CD14-positive monocyte (primary cell): ENCODE measurements at regions of chr3 and their contacts with region 1.

Region 1: GRCh38 chr3:57755668-57756527 is at the start of gene SLMAP:
- DNase-seq: peak; percentile 94 to 95 (median 94)
- H3K4me3 ChIP-seq: peak within 1 kb of the TSS; percentile 86 to 98 (median 97)
- H3K4me3 Mint-ChIP-seq: peak within 1 kb of the TSS; percentile 99 to 100
- H3K27ac ChIP-seq: peak within 1 kb of the TSS; percentile 1 to 95
- H3K27ac Mint-ChIP-seq: peak within 1 kb of the TSS; percentile 88 to 98 (median 94)
- H3K4me1 ChIP-seq: peaks cover 27 to 39% of the 10 kb centered on the region in 2 donors
- H3K4me1 Mint-ChIP-seq: peaks cover 34% of the 10 kb centered on the region
- H3K27me3 ChIP-seq: no peaks in the 10 kb centered on the region
- H3K27me3 Mint-ChIP-seq: no peaks in the 10 kb centered on the region
- CTCF ChIP-seq: no peak
- polyA plus RNA-seq, gene SLMAP: 12.3 to 17.6 (median 16.1) TPM

Region 2: GRCh38 chr3:56915966-56916586 is 839.8 kb before region 1 on chr3:
- intact Hi-C with region 1: no loop called
- DNase-seq: peak; percentile 52 to 68 (median 55)
- H3K4me3 ChIP-seq: peak overlapping the region; percentile 38 to 78 (median 40)
- H3K4me3 Mint-ChIP-seq: peak overlapping the region; percentile 75 to 88
- H3K27ac ChIP-seq: peak overlapping the region; percentile 11 to 56
- H3K27ac Mint-ChIP-seq: peak overlapping the region; percentile 8 to 80 (median 50)
- H3K4me1 ChIP-seq: peaks cover 36 to 43% of the 10 kb centered on the region in 2 donors
- H3K4me1 Mint-ChIP-seq: peaks cover 46% of the 10 kb centered on the region
- H3K27me3 ChIP-seq: no peaks in the 10 kb centered on the region
- H3K27me3 Mint-ChIP-seq: peaks cover 0 to 1% (median 0%) of the 10 kb centered on the region in 3 donors
- CTCF ChIP-seq: no peak

Region 3: DNA sequence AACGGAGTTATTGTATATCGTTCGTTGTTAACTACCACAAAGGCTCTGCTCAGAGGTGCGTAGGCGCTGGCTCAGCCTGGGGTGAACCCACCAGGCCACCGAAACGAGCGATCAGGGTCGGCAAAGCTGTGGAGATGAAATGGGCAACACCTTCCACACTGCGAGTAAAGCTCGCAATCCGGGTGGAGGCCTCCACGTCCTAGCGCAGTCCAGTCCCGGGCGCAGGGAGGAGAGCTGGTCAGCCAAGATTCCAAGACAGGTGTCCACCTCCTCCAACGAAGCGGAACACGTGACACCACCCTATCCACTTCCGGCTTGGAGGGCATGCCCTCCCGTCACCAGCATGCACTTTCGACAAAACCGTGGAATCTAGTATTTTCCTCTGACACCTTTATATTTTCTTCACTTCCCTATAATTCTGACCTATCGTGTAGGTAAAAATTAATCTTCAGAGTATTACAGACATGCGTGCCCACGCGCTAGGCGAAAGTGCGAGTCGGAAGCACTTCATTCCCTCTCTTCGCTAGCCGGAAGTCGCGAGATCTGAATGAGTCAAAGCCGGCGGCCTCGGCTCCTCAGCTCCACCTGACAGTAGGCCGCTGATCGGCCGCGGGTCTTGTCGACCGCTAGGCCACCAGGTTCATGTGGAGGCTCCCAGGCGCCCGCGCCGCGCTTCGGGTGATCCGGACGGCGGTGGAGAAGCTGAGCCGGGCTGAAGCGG is 200.0 kb before region 1 on chr3 and contains the start of gene PDE12:
- intact Hi-C with region 1: loop called in 1 of 2 experiments (anchors 5 kb)
- DNase-seq: peak; percentile 89 to 91 (median 91)
- H3K4me3 ChIP-seq: peak within 1 kb of the TSS; percentile 73 to 94 (median 86)
- H3K4me3 Mint-ChIP-seq: peak within 1 kb of the TSS; percentile 97 to 99
- H3K27ac ChIP-seq: peak within 1 kb of the TSS; percentile 94 to 96
- H3K27ac Mint-ChIP-seq: peak within 1 kb of the TSS; percentile 96 to 100 (median 99)
- H3K4me1 ChIP-seq: peaks cover 25 to 27% of the 10 kb centered on the region in 2 donors
- H3K4me1 Mint-ChIP-seq: peaks cover 32% of the 10 kb centered on the region
- H3K27me3 ChIP-seq: no peaks in the 10 kb centered on the region
- H3K27me3 Mint-ChIP-seq: peaks cover 0 to 1% (median 0%) of the 10 kb centered on the region in 3 donors
- CTCF ChIP-seq: no peak
- polyA plus RNA-seq, gene PDE12: 5.1 to 11.3 (median 11.0) TPM

Region 4: DNA sequence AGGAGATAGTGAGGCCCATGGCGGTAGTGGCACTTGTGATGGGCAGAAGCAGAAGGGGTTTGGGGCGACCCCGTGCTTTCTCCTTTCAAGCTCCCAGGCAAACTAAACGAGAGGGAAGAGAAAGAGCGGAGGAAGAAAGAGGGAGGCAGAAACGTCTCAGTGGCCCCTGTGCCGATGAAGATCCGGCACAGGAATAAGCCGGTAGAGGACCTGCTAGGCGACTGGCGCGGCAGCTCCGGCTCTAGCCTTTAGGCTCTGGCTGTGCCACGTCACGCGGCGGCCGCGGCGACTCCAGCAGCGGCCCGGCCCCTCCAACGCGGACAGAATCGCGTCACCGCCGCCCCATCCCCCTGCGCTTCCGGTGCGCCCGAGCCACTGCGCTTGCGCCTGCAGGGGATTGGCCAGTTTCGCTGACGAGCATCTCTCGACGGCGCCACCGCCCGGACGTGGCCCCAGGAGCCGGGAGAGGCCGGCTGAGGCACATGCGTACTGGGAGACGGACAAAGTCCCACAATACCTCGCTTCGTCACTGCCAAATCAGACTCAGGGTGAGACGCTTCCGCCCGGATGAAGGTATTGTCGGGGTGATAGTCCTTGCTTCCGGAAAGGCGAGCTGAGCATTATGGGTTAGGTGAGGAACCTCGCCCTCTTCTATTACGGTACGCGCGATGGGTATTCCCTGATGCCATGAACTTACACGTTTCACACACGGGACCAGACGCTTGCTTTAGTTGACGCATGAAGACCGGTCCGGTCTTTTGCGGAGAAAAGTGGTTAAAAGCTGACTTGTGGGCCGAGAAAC is 158.6 kb before region 1 on chr3 and contains the start of gene ARF4:
- intact Hi-C with region 1: loop called (anchors 2 to 5 kb)
- DNase-seq: peak; percentile 98 to 100 (median 100)
- H3K4me3 ChIP-seq: peak within 1 kb of the TSS; percentile 79 to 97 (median 87)
- H3K4me3 Mint-ChIP-seq: peak within 1 kb of the TSS; percentile 99
- H3K27ac ChIP-seq: peak within 1 kb of the TSS; percentile 99
- H3K27ac Mint-ChIP-seq: peak within 1 kb of the TSS; percentile 99 to 100 (median 100)
- H3K4me1 ChIP-seq: peaks cover 20 to 31% of the 10 kb centered on the region in 2 donors
- H3K4me1 Mint-ChIP-seq: peaks cover 37% of the 10 kb centered on the region
- H3K27me3 ChIP-seq: no peaks in the 10 kb centered on the region
- H3K27me3 Mint-ChIP-seq: no peaks in the 10 kb centered on the region
- CTCF ChIP-seq: peak; percentile 28
- polyA plus RNA-seq, gene ARF4: 60.2 to 229 (median 224) TPM

Region 5: GRCh38 chr3:57652203-57652602 is 103.7 kb before region 1 on chr3:
- intact Hi-C with region 1: no loop called
- DNase-seq: no peak
- H3K4me3 ChIP-seq: no peak overlapping the region
- H3K4me3 Mint-ChIP-seq: no peak overlapping the region
- H3K27ac ChIP-seq: peak overlapping the region in 1 of 2 donors; percentile 18
- H3K27ac Mint-ChIP-seq: peak overlapping the region in 2 of 7 donors; percentile 5 to 19
- H3K4me1 ChIP-seq: no peaks in the 10 kb centered on the region
- H3K4me1 Mint-ChIP-seq: no peaks in the 10 kb centered on the region
- H3K27me3 ChIP-seq: no peaks in the 10 kb centered on the region
- H3K27me3 Mint-ChIP-seq: no peaks in the 10 kb centered on the region
- CTCF ChIP-seq: no peak

Region 6: DNA sequence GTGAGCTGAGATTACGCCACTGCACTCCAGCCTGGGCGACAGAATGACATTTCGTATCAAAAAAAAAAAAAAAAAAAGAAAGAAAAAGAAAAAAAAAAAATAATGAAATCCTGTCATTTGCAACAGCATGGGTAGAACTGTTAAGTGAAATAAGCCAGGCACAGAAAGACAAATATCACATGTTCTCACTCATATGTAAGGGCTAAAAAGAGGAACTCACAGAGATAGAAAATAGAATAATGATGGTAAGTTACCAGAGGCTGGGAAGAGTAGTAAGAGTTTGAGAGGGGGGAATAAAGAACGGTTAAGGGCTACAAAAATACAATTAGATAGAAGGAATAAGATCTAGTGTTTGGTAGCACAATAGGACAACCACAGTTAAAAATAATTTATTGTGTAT is 82.7 kb before region 1 on chr3:
- intact Hi-C with region 1: loop called in 1 of 2 experiments (anchors 5 kb)
- DNase-seq: peak; percentile 26 to 48 (median 47)
- H3K4me3 ChIP-seq: no peak overlapping the region
- H3K4me3 Mint-ChIP-seq: peak overlapping the region in 1 of 2 donors; percentile 24
- H3K27ac ChIP-seq: peak overlapping the region; percentile 7 to 42
- H3K27ac Mint-ChIP-seq: peak overlapping the region; percentile 20 to 90 (median 73)
- H3K4me1 ChIP-seq: peaks cover 17 to 28% of the 10 kb centered on the region in 2 donors
- H3K4me1 Mint-ChIP-seq: peaks cover 34% of the 10 kb centered on the region
- H3K27me3 ChIP-seq: no peaks in the 10 kb centered on the region
- H3K27me3 Mint-ChIP-seq: peaks cover 0 to 1% (median 0%) of the 10 kb centered on the region in 3 donors
- CTCF ChIP-seq: no peak

Region 7: DNA sequence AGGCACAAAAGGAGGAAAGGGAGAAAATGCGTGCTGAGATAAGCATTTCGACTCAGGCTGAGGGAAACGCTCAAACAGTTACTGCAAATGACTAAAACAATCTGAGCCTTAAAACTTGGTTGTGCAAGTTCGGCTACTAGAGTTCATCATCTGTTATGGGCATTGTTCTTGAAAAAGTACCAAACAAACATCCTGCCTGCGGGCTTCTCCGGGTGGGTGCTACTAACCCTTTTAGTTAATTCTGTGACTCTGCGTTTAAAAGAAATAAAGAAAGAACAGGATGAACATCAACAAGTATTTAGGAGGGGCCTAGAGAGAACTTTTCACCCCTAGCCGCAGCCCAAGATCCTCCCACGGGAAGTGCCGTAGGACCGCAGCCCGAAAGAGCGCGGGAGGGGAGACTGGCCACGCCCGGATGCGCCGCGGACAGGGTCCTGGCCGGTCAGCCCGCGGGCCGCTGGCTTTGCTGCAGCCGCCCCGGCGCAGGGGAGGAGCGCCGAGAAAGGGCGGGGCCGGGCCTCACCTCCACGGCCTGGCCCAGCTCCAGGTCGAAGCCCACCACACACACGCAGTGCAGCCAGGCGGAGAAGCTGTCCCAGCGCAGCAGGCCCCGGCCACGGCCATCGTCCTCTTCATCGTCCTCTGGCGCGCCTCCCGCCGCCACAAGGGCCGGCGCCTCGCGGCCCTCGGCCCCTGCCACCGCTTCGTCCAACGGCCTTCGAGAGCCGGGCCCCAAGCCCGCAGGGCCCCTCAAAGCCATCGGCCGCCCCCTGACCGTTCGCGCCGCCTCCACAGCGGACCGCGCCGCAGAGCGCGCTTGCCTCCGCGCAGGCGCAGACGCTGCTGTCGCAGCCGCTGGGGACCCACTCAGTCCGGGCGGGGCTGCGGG is 63.4 kb before region 1 on chr3 and contains the start of gene DENND6A:
- intact Hi-C with region 1: loop called (anchors 5 kb)
- DNase-seq: peak; percentile 86 to 96 (median 88)
- H3K4me3 ChIP-seq: peak within 1 kb of the TSS; percentile 59 to 90 (median 87)
- H3K4me3 Mint-ChIP-seq: peak within 1 kb of the TSS; percentile 88 to 90
- H3K27ac ChIP-seq: peak within 1 kb of the TSS; percentile 89 to 91
- H3K27ac Mint-ChIP-seq: peak within 1 kb of the TSS; percentile 92 to 99 (median 97)
- H3K4me1 ChIP-seq: peaks cover 22 to 45% of the 10 kb centered on the region in 2 donors
- H3K4me1 Mint-ChIP-seq: peaks cover 31% of the 10 kb centered on the region
- H3K27me3 ChIP-seq: no peaks in the 10 kb centered on the region
- H3K27me3 Mint-ChIP-seq: no peaks in the 10 kb centered on the region
- CTCF ChIP-seq: no peak
- polyA plus RNA-seq, gene DENND6A: 10.8 to 20.8 (median 15.4) TPM